CD4-positive, alpha-beta memory T cell (primary cell): ENCODE measurements at regions of chr10 and their contacts with region 1.

Region 1: GRCh38 chr10:11225935-11226334 is 208.3 kb downstream of the CELF2 start:
- DNase-seq: peak; percentile 46 to 86 (median 50)
- H3K4me3 ChIP-seq: peak overlapping the region in 1 of 2 donors; percentile 36
- H3K4me3 Mint-ChIP-seq: peak overlapping the region in 7 of 8 donors; percentile 64 to 84 (median 75)
- H3K27ac ChIP-seq: peak overlapping the region; percentile 58
- H3K27ac Mint-ChIP-seq: peak overlapping the region; percentile 90 to 98 (median 94)
- H3K4me1 ChIP-seq: peaks cover 96% of the 10 kb centered on the region
- H3K4me1 Mint-ChIP-seq: peaks cover 81 to 99% (median 93%) of the 10 kb centered on the region in 4 donors
- H3K27me3 ChIP-seq: no peaks in the 10 kb centered on the region
- H3K27me3 Mint-ChIP-seq: no peaks in the 10 kb centered on the region

Region 2: GRCh38 chr10:11145495-11145855 is 80.5 kb before region 1 on chr10:
- CTCF ChIA-PET with region 1: interaction called, 3 read pairs
- POLR2A ChIA-PET with region 1: interaction called, 18 read pairs
- intact Hi-C with region 1: no loop called
- DNase-seq: peak; percentile 74 to 88 (median 79)
- H3K4me3 ChIP-seq: peak overlapping the region in 1 of 2 donors; percentile 41
- H3K4me3 Mint-ChIP-seq: peak overlapping the region; percentile 68 to 88 (median 78)
- H3K27ac ChIP-seq: peak overlapping the region; percentile 93
- H3K27ac Mint-ChIP-seq: peak overlapping the region; percentile 91 to 100 (median 99)
- H3K4me1 ChIP-seq: peaks cover 98% of the 10 kb centered on the region
- H3K4me1 Mint-ChIP-seq: peaks cover 81 to 98% (median 91%) of the 10 kb centered on the region in 4 donors
- H3K27me3 ChIP-seq: no peaks in the 10 kb centered on the region
- H3K27me3 Mint-ChIP-seq: no peaks in the 10 kb centered on the region

Region 3: GRCh38 chr10:11197266-11197712 is 28.6 kb before region 1 on chr10:
- CTCF ChIA-PET with region 1: no interaction called
- POLR2A ChIA-PET with region 1: interaction called, 10 read pairs
- intact Hi-C with region 1: no loop called
- DNase-seq: no peak
- H3K4me3 ChIP-seq: no peak overlapping the region
- H3K4me3 Mint-ChIP-seq: peak overlapping the region in 7 of 8 donors; percentile 14 to 84 (median 49)
- H3K27ac ChIP-seq: peak overlapping the region; percentile 2
- H3K27ac Mint-ChIP-seq: peak overlapping the region; percentile 30 to 94 (median 75)
- H3K4me1 ChIP-seq: peaks cover 94% of the 10 kb centered on the region
- H3K4me1 Mint-ChIP-seq: peaks cover 82 to 98% (median 90%) of the 10 kb centered on the region in 4 donors
- H3K27me3 ChIP-seq: no peaks in the 10 kb centered on the region
- H3K27me3 Mint-ChIP-seq: no peaks in the 10 kb centered on the region

Region 4: GRCh38 chr10:11209830-11210181 is 16.1 kb before region 1 on chr10:
- CTCF ChIA-PET with region 1: interaction called, 4 read pairs
- POLR2A ChIA-PET with region 1: interaction called, 42 read pairs
- intact Hi-C with region 1: loop called (anchors 2 kb)
- DNase-seq: no peak
- H3K4me3 ChIP-seq: peak overlapping the region in 1 of 2 donors; percentile 32
- H3K4me3 Mint-ChIP-seq: peak overlapping the region; percentile 68 to 94 (median 78)
- H3K27ac ChIP-seq: peak overlapping the region; percentile 52
- H3K27ac Mint-ChIP-seq: peak overlapping the region; percentile 56 to 96 (median 87)
- H3K4me1 ChIP-seq: peaks cover 100% of the 10 kb centered on the region
- H3K4me1 Mint-ChIP-seq: peaks cover 83 to 99% (median 92%) of the 10 kb centered on the region in 4 donors
- H3K27me3 ChIP-seq: no peaks in the 10 kb centered on the region
- H3K27me3 Mint-ChIP-seq: no peaks in the 10 kb centered on the region

Region 5: GRCh38 chr10:11236234-11236633 is 10.3 kb after region 1 on chr10:
- CTCF ChIA-PET with region 1: interaction called, 3 read pairs
- POLR2A ChIA-PET with region 1: interaction called, 44 read pairs
- intact Hi-C with region 1: loop called (anchors 1 kb)
- DNase-seq: peak; percentile 58 to 78 (median 63)
- H3K4me3 ChIP-seq: no peak overlapping the region
- H3K4me3 Mint-ChIP-seq: peak overlapping the region; percentile 25 to 74 (median 65)
- H3K27ac ChIP-seq: peak overlapping the region; percentile 57
- H3K27ac Mint-ChIP-seq: peak overlapping the region; percentile 76 to 92 (median 90)
- H3K4me1 ChIP-seq: peaks cover 97% of the 10 kb centered on the region
- H3K4me1 Mint-ChIP-seq: peaks cover 68 to 81% (median 72%) of the 10 kb centered on the region in 4 donors
- H3K27me3 ChIP-seq: no peaks in the 10 kb centered on the region
- H3K27me3 Mint-ChIP-seq: no peaks in the 10 kb centered on the region

Region 6: DNA sequence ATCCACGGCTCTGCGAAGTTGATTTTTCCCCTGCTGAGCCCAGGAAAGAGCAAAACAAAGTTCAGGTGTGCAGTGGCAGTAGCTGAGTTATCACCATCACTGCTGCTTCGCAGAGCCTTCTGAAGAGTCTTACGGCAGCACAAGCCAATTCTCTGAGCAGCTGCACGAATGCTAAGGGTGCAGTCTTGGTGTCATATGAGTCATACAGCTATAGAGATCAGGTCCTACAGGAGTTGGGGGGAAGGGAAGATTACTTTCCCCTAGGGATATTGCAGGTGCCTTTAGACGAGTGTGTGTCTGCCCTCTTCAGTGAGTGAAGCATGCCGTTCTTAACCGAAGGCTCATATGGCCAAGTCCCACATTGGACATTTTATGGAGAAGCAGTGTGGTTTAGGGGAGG is 19.6 kb after region 1 on chr10:
- CTCF ChIA-PET with region 1: interaction called, 4 read pairs
- POLR2A ChIA-PET with region 1: interaction called, 11 read pairs
- intact Hi-C with region 1: no loop called
- DNase-seq: peak in 1 of 5 donors; percentile 34
- H3K4me3 ChIP-seq: no peak overlapping the region
- H3K4me3 Mint-ChIP-seq: no peak overlapping the region
- H3K27ac ChIP-seq: peak overlapping the region; percentile 29
- H3K27ac Mint-ChIP-seq: no peak overlapping the region
- H3K4me1 ChIP-seq: peaks cover 81% of the 10 kb centered on the region
- H3K4me1 Mint-ChIP-seq: peaks cover 15 to 43% (median 27%) of the 10 kb centered on the region in 4 donors
- H3K27me3 ChIP-seq: no peaks in the 10 kb centered on the region
- H3K27me3 Mint-ChIP-seq: no peaks in the 10 kb centered on the region

Region 7: GRCh38 chr10:11270135-11270857 is 44.4 kb after region 1 on chr10:
- CTCF ChIA-PET with region 1: interaction called, 10 read pairs
- POLR2A ChIA-PET with region 1: no interaction called
- intact Hi-C with region 1: no loop called
- DNase-seq: peak; percentile 55 to 66 (median 65)
- H3K4me3 ChIP-seq: no peak overlapping the region
- H3K4me3 Mint-ChIP-seq: peak overlapping the region; percentile 2 to 44 (median 11)
- H3K27ac ChIP-seq: no peak overlapping the region
- H3K27ac Mint-ChIP-seq: peak overlapping the region; percentile 48 to 89 (median 82)
- H3K4me1 ChIP-seq: peaks cover 41% of the 10 kb centered on the region
- H3K4me1 Mint-ChIP-seq: peaks cover 45 to 84% (median 65%) of the 10 kb centered on the region in 4 donors
- H3K27me3 ChIP-seq: no peaks in the 10 kb centered on the region
- H3K27me3 Mint-ChIP-seq: no peaks in the 10 kb centered on the region